Mammary epithelial cell (primary cell): ENCODE measurements at regions of chr14 and their contacts with region 1.

Region 1: GRCh38 chr14:50003213-50004031 is 110.5 kb downstream of the ARF6 start:
- DNase-seq: peak; percentile 78
- H3K4me3 ChIP-seq: peak overlapping the region; percentile 32 to 46 (median 42)
- H3K27ac ChIP-seq: peak overlapping the region; percentile 97
- H3K4me1 ChIP-seq: peaks cover 73% of the 10 kb centered on the region
- H3K27me3 ChIP-seq: no peaks in the 10 kb centered on the region
- CTCF ChIP-seq: peak in 1 of 2 donors; percentile 21

Region 2: DNA sequence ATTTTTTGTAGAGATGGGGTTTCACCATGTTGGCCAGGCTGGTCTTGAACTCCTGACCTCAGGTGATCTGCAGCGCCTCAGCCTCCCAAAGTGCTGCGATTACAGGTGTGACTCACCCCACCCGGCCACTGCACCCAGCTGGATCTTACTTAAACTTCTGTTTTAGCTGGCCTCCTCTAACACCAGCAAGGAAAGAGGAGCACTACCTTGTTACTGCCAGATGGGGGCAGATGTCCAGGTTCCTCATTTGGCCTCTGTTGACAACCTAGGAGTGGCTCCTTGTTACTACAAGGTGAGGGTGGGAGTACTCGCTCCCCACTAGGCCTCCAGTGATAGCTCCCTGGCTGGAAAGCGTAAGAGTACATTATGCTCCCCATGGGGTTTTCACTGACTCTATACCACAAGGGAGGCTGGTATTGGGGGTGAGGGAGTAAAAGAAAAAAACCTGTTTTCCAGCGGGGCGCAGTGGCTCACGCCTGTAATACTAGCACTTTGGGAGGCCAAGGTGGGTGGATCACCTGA is 123.7 kb before region 1 on chr14:
- CTCF ChIA-PET with region 1: interaction called, 12 read pairs
- dilution Hi-C with region 1: no loop called
- in situ Hi-C with region 1: no loop called
- intact Hi-C with region 1: no loop called
- DNase-seq: peak; percentile 63
- H3K4me3 ChIP-seq: no peak overlapping the region
- H3K27ac ChIP-seq: no peak overlapping the region
- H3K4me1 ChIP-seq: peaks cover 7% of the 10 kb centered on the region
- H3K27me3 ChIP-seq: no peaks in the 10 kb centered on the region
- CTCF ChIP-seq: peak; percentile 66 to 69

Region 3: DNA sequence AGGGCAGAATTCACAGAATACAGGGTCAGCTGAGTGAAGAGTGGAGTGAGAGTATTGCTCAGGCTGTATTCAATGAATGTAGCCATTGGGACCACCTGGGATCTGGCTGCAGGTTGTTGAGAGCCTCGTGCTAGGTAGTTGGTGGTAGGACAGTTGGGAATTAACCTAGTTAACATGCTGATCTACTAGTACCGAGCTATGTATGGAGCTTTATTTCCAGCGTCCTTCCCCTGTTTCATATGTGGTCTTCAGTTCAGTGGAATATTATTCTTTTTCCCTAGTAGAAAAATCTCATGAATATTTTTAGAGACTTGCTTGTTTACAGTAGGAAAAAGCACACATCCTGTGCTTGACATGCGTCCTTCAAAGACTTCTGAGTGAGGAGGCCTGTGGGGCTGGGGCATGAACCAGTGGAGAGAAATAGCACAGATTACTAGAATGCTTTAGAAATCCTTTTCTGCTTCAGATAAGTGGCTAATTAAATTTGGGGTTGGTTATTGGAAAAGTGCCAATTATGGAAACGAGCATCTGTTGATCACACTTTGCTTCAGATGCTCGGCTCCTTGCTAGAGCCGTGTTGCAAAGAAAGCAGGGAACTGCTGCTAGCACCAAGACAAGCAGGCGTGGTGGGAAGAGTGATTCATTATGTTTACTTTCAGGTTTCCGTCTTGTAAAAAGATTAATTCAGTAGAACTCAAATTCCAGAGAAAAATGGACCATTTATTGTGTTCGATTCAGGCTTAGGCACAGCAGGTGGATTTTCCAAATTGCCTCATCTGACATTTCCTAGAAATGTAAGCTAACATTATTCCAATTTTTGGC is 56.9 kb before region 1 on chr14:
- CTCF ChIA-PET with region 1: interaction called, 11 read pairs
- dilution Hi-C with region 1: no loop called
- in situ Hi-C with region 1: no loop called
- intact Hi-C with region 1: loop called (anchors 1 kb)
- DNase-seq: peak; percentile 72
- H3K4me3 ChIP-seq: no peak overlapping the region
- H3K27ac ChIP-seq: no peak overlapping the region
- H3K4me1 ChIP-seq: peaks cover 30% of the 10 kb centered on the region
- H3K27me3 ChIP-seq: no peaks in the 10 kb centered on the region
- CTCF ChIP-seq: no peak

Region 4: GRCh38 chr14:50038398-50039119 is 35.1 kb after region 1 on chr14:
- CTCF ChIA-PET with region 1: no interaction called
- dilution Hi-C with region 1: no loop called
- in situ Hi-C with region 1: loop called in 1 of 2 experiments (anchors 5 kb)
- intact Hi-C with region 1: loop called (anchors 1 kb)
- DNase-seq: peak; percentile 100
- H3K4me3 ChIP-seq: no peak overlapping the region
- H3K27ac ChIP-seq: peak overlapping the region; percentile 97
- H3K4me1 ChIP-seq: peaks cover 58% of the 10 kb centered on the region
- H3K27me3 ChIP-seq: no peaks in the 10 kb centered on the region
- CTCF ChIP-seq: peak; percentile 8 to 16

Region 5: GRCh38 chr14:50099335-50099734 is 95.9 kb after region 1 on chr14:
- CTCF ChIA-PET with region 1: no interaction called
- dilution Hi-C with region 1: loop called (anchors 5 kb)
- in situ Hi-C with region 1: no loop called
- intact Hi-C with region 1: loop called (anchors 2 kb)
- DNase-seq: peak; percentile 86
- H3K4me3 ChIP-seq: no peak overlapping the region
- H3K27ac ChIP-seq: peak overlapping the region; percentile 23
- H3K4me1 ChIP-seq: peaks cover 16% of the 10 kb centered on the region
- H3K27me3 ChIP-seq: no peaks in the 10 kb centered on the region
- CTCF ChIP-seq: no peak

Region 6: GRCh38 chr14:50704454-50705010 is 701.1 kb after region 1 on chr14:
- CTCF ChIA-PET with region 1: no interaction called
- dilution Hi-C with region 1: no loop called
- in situ Hi-C with region 1: no loop called
- intact Hi-C with region 1: no loop called
- DNase-seq: no peak
- H3K4me3 ChIP-seq: no peak overlapping the region
- H3K27ac ChIP-seq: no peak overlapping the region
- H3K4me1 ChIP-seq: no peaks in the 10 kb centered on the region
- H3K27me3 ChIP-seq: no peaks in the 10 kb centered on the region
- CTCF ChIP-seq: no peak